Naive thymus-derived CD4-positive, alpha-beta T cell (primary cell): ENCODE measurements at regions of chrX and their contacts with region 1.

Region 1: DNA sequence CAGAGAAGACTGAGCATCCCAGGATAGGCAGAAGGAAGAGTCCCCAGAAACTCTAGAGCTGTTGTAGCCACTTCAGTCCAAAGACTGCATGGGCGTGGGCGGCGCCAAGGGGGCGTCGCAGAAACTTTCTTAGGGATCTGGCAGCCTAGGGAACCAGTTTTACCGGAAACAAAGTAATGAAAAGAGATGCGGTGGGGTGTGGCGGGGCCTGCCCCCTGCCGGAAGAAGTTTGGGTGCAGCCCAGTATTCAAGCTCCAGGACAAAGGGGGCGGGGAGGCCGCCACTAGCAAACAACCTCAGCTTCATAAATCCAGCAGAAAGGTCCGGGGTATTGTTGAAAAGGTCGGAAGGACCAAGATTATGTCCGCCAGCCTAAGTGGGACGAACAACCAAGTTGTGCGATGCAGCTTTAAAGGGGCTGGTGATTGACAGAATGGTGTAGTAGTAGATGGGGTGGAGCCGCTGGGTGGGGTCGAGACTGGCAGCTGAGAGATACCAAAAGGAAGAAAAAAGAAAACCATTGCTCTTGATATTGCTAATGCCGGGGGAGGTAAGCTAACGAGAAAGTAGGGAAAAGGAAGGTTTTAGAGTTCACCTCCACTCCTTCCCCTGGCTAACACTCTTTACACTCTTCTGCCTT is 190.5 kb downstream of the RRAGB start:
- DNase-seq: peak; percentile 7 to 50 (median 44)
- ATAC-seq: peak; percentile 80
- H3K4me3 ChIP-seq: peak overlapping the region; percentile 83
- H3K4me3 Mint-ChIP-seq: peak overlapping the region; percentile 80 to 97 (median 94)
- H3K27ac ChIP-seq: peak overlapping the region; percentile 61
- H3K27ac Mint-ChIP-seq: peak overlapping the region; percentile 53 to 93 (median 85)
- H3K4me1 ChIP-seq: no peaks in the 10 kb centered on the region
- H3K4me1 Mint-ChIP-seq: peaks cover 6 to 32% (median 16%) of the 10 kb centered on the region in 7 donors
- H3K27me3 ChIP-seq: no peaks in the 10 kb centered on the region
- H3K27me3 Mint-ChIP-seq: no peaks in the 10 kb centered on the region

Region 2: DNA sequence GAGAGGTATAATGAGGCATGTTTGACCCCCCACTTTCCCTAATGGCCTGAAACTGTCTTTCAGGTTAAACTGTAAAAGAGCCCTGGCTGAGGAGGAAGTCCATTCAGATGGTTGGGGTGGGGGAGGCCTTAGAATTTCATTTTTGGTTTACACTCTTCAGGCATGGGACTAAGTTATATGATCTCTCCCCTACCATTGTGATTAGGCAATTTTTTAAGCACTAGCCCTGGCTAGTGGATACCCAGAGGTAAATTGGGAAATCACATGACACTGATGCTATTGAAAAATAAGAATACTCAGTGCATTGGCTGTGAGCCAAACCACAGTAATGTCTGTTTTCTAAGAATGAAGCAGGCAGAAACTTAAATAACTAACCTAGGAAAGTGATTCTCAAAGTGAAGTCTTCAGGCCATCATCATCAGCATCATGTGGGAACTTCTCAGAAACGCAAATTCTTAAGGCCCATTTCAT is 40.9 kb before region 1 on chrX:
- CTCF ChIA-PET with region 1: no interaction called
- POLR2A ChIA-PET with region 1: no interaction called
- intact Hi-C with region 1: no loop called
- DNase-seq: peak in 2 of 9 donors; percentile 5 to 21
- ATAC-seq: no peak
- H3K4me3 ChIP-seq: no peak overlapping the region
- H3K4me3 Mint-ChIP-seq: peak overlapping the region in 1 of 10 donors; percentile 12
- H3K27ac ChIP-seq: no peak overlapping the region
- H3K27ac Mint-ChIP-seq: no peak overlapping the region
- H3K4me1 ChIP-seq: no peaks in the 10 kb centered on the region
- H3K4me1 Mint-ChIP-seq: peaks cover 0 to 13% (median 9%) of the 10 kb centered on the region in 7 donors
- H3K27me3 ChIP-seq: no peaks in the 10 kb centered on the region
- H3K27me3 Mint-ChIP-seq: peaks cover 0 to 4% (median 0%) of the 10 kb centered on the region in 5 donors

Region 3: DNA sequence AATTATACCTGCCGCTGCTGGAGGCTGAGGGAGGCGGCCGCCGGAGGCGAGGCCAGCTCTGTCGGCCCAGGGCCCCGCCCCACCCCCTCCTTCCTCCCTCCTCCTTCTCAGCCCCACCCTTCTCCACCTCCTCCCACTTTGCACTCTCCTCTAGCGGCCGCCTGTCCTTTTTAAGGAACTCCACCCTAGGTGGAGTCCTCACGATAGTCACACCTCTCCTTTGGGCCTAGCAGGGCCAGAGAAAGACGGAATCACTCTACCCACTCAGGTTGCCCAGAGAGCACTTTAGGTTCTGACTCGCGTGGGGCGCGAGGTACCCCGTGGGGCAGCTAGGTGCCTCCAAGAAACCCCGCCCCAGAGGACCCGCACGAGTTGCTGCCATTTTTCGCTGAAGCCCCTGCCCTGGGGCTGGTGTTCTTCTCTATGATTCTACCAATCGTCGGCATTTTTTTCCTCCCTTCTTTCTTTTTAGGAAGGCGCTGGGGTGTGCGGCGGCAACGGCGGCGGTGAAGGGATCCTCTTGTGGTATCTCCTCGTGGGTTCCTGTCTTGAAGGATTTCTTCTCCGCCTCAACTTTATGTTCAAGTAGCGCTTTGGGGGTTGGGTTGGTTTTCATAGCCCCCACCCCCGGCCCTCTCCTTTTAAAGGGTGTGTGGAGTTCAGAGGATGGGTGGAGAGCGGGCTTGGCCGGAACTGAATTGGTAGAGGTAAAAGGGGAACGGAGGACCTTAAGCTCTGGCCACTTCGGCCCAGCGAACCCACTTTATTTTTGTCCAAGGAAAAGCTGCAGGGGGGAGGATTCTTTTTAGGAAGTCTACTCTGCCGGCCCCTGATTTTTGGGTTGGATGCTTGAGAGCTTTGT is 324.4 kb after region 1 on chrX and contains the start of gene KLF8:
- CTCF ChIA-PET with region 1: no interaction called
- POLR2A ChIA-PET with region 1: no interaction called
- intact Hi-C with region 1: loop called in 1 of 2 experiments (anchors 5 kb)
- DNase-seq: peak in 6 of 9 donors; percentile 3 to 40 (median 8)
- ATAC-seq: peak; percentile 73
- H3K4me3 ChIP-seq: peak within 1 kb of the TSS; percentile 41
- H3K4me3 Mint-ChIP-seq: peak within 1 kb of the TSS; percentile 80 to 89 (median 84)
- H3K27ac ChIP-seq: no peak within 1 kb of the TSS
- H3K27ac Mint-ChIP-seq: peak within 1 kb of the TSS in 6 of 9 donors; percentile 1 to 90 (median 32)
- H3K4me1 ChIP-seq: peaks cover 0 to 5% of the 10 kb centered on the region in 2 donors
- H3K4me1 Mint-ChIP-seq: peaks cover 5 to 48% (median 18%) of the 10 kb centered on the region in 7 donors
- H3K27me3 ChIP-seq: no peaks in the 10 kb centered on the region
- H3K27me3 Mint-ChIP-seq: peaks cover 0 to 4% (median 0%) of the 10 kb centered on the region in 5 donors
- total RNA-seq, gene KLF8: 0.38 to 17.9 (median 6.3) TPM